HepG2 (cell line): ENCODE measurements at regions of chr14 and their contacts with region 1.

Region 1: DNA sequence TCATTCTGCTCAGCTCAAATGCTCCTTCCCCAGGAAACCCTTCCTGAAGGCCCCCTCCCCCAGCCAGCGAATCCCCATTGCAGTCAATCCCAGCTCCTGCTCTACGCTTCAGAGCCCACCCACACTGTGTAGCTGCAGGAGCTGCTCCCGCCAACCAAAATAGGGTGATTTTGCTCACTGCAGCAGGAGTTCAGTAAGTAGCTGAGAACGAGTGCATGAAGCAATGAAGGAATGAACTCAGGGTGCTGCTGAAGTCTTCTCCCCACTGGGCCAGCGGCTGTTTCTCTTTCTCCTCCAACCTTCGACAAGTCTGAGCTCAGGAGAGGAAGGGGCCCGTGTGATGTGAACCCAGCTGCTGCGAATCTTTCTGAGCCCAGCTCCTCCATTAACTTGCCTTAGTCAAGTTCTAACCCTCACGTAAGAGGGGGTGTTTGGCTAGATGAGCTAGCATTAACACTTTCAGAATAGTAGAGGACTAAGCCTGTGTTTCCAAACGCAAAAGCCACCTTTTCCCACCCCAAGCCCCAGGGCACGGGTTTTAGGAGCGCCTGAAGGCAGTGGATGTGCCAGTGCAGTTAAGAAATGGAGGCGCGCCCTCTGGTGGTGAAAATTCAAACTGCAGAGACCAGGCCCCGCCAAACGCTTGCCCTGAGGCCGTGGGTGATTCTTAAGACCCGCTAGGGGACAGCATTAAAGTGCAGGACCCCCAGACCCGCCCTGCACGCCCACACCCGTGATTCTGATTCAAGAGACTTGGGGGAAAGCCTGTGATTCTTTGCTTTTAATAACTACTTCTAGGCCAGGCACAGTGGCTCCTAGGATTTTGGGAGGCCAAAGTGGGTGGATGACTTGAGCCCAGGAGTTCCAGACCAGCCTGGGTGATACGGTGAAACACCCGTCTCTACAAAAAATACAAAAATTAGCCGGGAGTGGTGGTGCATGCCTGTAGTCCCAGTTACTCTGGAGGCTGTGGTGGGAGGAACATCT is 11.9 kb upstream of the SERPINA4 start:
- DNase-seq: peak; percentile 56
- ATAC-seq: peak; percentile 88
- H3K4me3 ChIP-seq: peak overlapping the region; percentile 20 to 58 (median 20); a peak in 4 of 6 replicates
- H3K27ac ChIP-seq: no peak overlapping the region
- H3K4me1 ChIP-seq: peaks cover 73% of the 10 kb centered on the region
- H3K27me3 ChIP-seq: no peaks in the 10 kb centered on the region
- CTCF ChIP-seq: peak; percentile 90
- EP300 ChIP-seq: no peak
- POLR2A ChIP-seq: no peak
- RAD21 ChIP-seq: peak; percentile 84

Region 2: DNA sequence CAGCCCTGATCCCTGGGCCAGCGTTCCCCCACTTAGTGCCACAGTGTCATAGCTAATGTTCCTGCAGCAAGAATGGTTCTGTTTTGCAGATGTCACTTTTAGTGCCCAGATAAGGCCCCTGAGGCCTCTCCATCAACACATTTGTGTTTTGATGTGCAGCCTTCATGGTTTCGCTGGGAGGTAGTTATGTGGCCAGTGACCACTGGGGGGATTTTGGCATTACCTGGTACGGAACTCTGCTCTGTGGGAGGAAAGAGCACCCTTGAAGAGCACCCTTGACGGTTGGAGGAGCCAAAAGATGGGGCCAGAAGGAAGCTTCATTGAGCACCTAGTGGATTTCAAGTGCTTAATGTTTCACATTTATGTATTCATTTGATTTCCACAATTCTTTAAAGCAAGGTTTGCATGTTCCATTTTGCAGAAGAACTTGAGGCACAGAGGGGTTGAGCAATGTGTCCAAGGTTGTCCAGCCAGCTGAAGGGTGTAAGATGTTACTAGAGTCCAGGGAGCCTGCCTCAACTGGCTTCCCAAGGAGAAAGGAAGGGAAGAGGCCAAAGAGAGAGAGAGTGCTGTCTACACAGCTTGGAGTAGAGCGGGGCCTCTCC is 109.7 kb before region 1 on chr14:
- CTCF ChIA-PET with region 1: no interaction called
- POLR2A ChIA-PET with region 1: no interaction called
- in situ Hi-C with region 1: no loop called
- intact Hi-C with region 1: loop called (anchors 1 kb)
- DNase-seq: no peak
- ATAC-seq: peak; percentile 66
- H3K4me3 ChIP-seq: no peak overlapping the region
- H3K27ac ChIP-seq: no peak overlapping the region
- H3K4me1 ChIP-seq: peaks cover 19% of the 10 kb centered on the region
- H3K27me3 ChIP-seq: no peaks in the 10 kb centered on the region
- CTCF ChIP-seq: no peak
- EP300 ChIP-seq: no peak
- POLR2A ChIP-seq: peak in 1 of 2 experiments; percentile 35; a peak in 1 of 4 replicates
- RAD21 ChIP-seq: no peak

Region 3: GRCh38 chr14:94559638-94560290 is 10.5 kb after region 1 on chr14:
- CTCF ChIA-PET with region 1: no interaction called
- POLR2A ChIA-PET with region 1: interaction called, 23 read pairs
- in situ Hi-C with region 1: no loop called
- intact Hi-C with region 1: no loop called
- DNase-seq: no peak
- ATAC-seq: no peak
- H3K4me3 ChIP-seq: no peak overlapping the region
- H3K27ac ChIP-seq: no peak overlapping the region
- H3K4me1 ChIP-seq: peaks cover 64% of the 10 kb centered on the region
- H3K27me3 ChIP-seq: no peaks in the 10 kb centered on the region
- CTCF ChIP-seq: no peak
- EP300 ChIP-seq: no peak
- POLR2A ChIP-seq: no peak
- RAD21 ChIP-seq: no peak

Region 4: GRCh38 chr14:94681300-94682060 is 132.2 kb after region 1 on chr14:
- CTCF ChIA-PET with region 1: interaction called, 14 read pairs
- POLR2A ChIA-PET with region 1: no interaction called
- in situ Hi-C with region 1: loop called (anchors 10 kb)
- intact Hi-C with region 1: loop called (anchors 5 kb)
- DNase-seq: peak; percentile 78
- ATAC-seq: peak; percentile 78
- H3K4me3 ChIP-seq: no peak overlapping the region; a peak in 1 of 6 replicates
- H3K27ac ChIP-seq: peak overlapping the region; percentile 80
- H3K4me1 ChIP-seq: peaks cover 66% of the 10 kb centered on the region
- H3K27me3 ChIP-seq: peaks cover 5 to 9% of the 10 kb centered on the region in 2 experiments; a peak in 3 of 5 replicates
- CTCF ChIP-seq: peak; percentile 95
- EP300 ChIP-seq: 0 out of 4 replicates have a peak, but pooled peaks of 1 of the 2 experiments have one; percentile 40
- POLR2A ChIP-seq: no peak
- RAD21 ChIP-seq: peak; percentile 90

Region 5: GRCh38 chr14:94769391-94770250 is 220.3 kb after region 1 on chr14 and contains the start of gene GSC:
- CTCF ChIA-PET with region 1: no interaction called
- POLR2A ChIA-PET with region 1: no interaction called
- in situ Hi-C with region 1: no loop called
- intact Hi-C with region 1: no loop called
- DNase-seq: no peak
- ATAC-seq: peak; percentile 85
- H3K4me3 ChIP-seq: peak within 1 kb of the TSS; percentile 29 to 64 (median 30); a peak in 4 of 6 replicates
- H3K27ac ChIP-seq: no peak within 1 kb of the TSS
- H3K4me1 ChIP-seq: peaks cover 14% of the 10 kb centered on the region
- H3K27me3 ChIP-seq: peaks cover 12 to 87% of the 10 kb centered on the region in 2 experiments
- CTCF ChIP-seq: no peak
- EP300 ChIP-seq: no peak
- POLR2A ChIP-seq: no peak
- RAD21 ChIP-seq: no peak
- total RNA-seq, gene GSC: not detected in 2 replicates